ENCODE measurements at regions of chr19 and their contacts with region 1.

Region 1: GRCh38 chr19:2168619-2169424 is 5.1 kb downstream of the DOT1L start:
- DNase-seq: peak; percentile 74
- ATAC-seq: peak; percentile 49
- H3K4me3 Mint-ChIP-seq: peak overlapping the region; percentile 84
- H3K27ac Mint-ChIP-seq: peak overlapping the region; percentile 92
- H3K4me1 Mint-ChIP-seq: peaks cover 84% of the 10 kb centered on the region
- H3K27me3 Mint-ChIP-seq: no peaks in the 10 kb centered on the region
- CTCF ChIP-seq: no peak

Region 2: GRCh38 chr19:2016041-2016807 is 152.6 kb before region 1 on chr19:
- CTCF ChIA-PET with region 1: no interaction called
- POLR2A ChIA-PET with region 1: no interaction called
- intact Hi-C with region 1: no loop called
- DNase-seq: no peak
- ATAC-seq: peak; percentile 73
- H3K4me3 Mint-ChIP-seq: peak overlapping the region; percentile 60
- H3K27ac Mint-ChIP-seq: peak overlapping the region; percentile 56
- H3K4me1 Mint-ChIP-seq: peaks cover 29% of the 10 kb centered on the region
- H3K27me3 Mint-ChIP-seq: no peaks in the 10 kb centered on the region
- CTCF ChIP-seq: no peak

Region 3: GRCh38 chr19:2050991-2051772 is 117.6 kb before region 1 on chr19 and contains the start of gene MKNK2:
- CTCF ChIA-PET with region 1: no interaction called
- POLR2A ChIA-PET with region 1: interaction called, 19 read pairs
- intact Hi-C with region 1: no loop called
- DNase-seq: peak; percentile 99
- ATAC-seq: peak; percentile 61
- H3K4me3 Mint-ChIP-seq: peak within 1 kb of the TSS; percentile 93
- H3K27ac Mint-ChIP-seq: peak within 1 kb of the TSS; percentile 97
- H3K4me1 Mint-ChIP-seq: peaks cover 77% of the 10 kb centered on the region
- H3K27me3 Mint-ChIP-seq: no peaks in the 10 kb centered on the region
- CTCF ChIP-seq: no peak
- total RNA-seq, gene MKNK2: 1,134 and 1,197 TPM in 2 replicates

Region 4: DNA sequence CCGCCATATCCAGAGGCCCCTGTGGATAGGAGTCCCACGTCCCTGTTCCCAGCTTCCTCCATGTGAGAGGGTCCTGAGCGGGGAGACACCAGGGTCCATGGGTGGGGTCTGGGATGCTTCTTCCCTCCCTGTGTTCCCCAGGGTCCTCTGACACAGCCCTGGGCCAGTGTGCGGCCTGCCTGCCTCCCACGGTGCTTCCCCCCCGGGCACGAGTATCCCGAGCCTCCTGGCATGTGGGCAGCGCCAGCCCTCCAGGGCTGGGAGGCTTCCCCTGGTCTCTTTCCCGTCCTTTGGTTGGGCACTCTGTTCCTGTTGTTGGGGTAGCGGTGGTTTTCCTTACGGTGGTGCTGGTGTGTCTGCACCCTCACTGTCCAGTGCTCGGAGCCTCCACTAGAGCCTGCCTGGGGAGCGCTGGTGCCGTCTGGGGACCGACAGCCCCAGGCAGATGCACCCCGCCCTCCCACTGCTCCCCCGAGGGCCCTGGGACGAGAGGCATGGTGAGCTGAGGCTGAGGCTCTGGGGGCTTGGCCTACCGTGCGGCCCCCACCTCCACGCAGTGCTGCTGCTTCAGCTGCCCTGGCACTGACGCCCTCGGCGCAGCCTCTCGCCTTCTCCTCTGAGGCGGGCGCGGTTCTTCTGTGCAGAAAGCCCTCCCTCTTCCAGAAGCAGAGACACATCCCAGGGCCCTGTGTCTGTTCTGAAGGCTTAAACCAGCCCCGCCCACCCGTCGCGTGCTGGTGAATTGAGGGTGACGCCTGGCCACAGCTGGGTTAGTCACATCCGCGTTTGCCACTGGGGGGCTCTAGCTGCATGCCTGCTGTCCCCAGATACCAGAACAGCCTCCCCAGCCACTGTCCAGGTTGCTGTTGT is 39.4 kb after region 1 on chr19:
- CTCF ChIA-PET with region 1: no interaction called
- POLR2A ChIA-PET with region 1: no interaction called
- intact Hi-C with region 1: no loop called
- DNase-seq: no peak
- ATAC-seq: peak; percentile 76
- H3K4me3 Mint-ChIP-seq: no peak overlapping the region
- H3K27ac Mint-ChIP-seq: no peak overlapping the region
- H3K4me1 Mint-ChIP-seq: peaks cover 6% of the 10 kb centered on the region
- H3K27me3 Mint-ChIP-seq: no peaks in the 10 kb centered on the region
- CTCF ChIP-seq: no peak

Region 5: GRCh38 chr19:2223959-2224358 is 55.1 kb after region 1 on chr19:
- CTCF ChIA-PET with region 1: interaction called, 3 read pairs
- POLR2A ChIA-PET with region 1: interaction called, 9 read pairs
- intact Hi-C with region 1: loop called (anchors 1 kb)
- DNase-seq: peak; percentile 67
- ATAC-seq: peak; percentile 89
- H3K4me3 Mint-ChIP-seq: peak overlapping the region; percentile 48
- H3K27ac Mint-ChIP-seq: peak overlapping the region; percentile 87
- H3K4me1 Mint-ChIP-seq: peaks cover 37% of the 10 kb centered on the region
- H3K27me3 Mint-ChIP-seq: no peaks in the 10 kb centered on the region
- CTCF ChIP-seq: no peak

Region 6: GRCh38 chr19:2455851-2456570 is 287.2 kb after region 1 on chr19:
- CTCF ChIA-PET with region 1: no interaction called
- POLR2A ChIA-PET with region 1: no interaction called
- intact Hi-C with region 1: loop called (anchors 5 kb)
- DNase-seq: peak; percentile 51
- ATAC-seq: peak; percentile 53
- H3K4me3 Mint-ChIP-seq: peak overlapping the region; percentile 89
- H3K27ac Mint-ChIP-seq: peak overlapping the region; percentile 85
- H3K4me1 Mint-ChIP-seq: peaks cover 30% of the 10 kb centered on the region
- H3K27me3 Mint-ChIP-seq: no peaks in the 10 kb centered on the region
- CTCF ChIP-seq: no peak

Region 7: DNA sequence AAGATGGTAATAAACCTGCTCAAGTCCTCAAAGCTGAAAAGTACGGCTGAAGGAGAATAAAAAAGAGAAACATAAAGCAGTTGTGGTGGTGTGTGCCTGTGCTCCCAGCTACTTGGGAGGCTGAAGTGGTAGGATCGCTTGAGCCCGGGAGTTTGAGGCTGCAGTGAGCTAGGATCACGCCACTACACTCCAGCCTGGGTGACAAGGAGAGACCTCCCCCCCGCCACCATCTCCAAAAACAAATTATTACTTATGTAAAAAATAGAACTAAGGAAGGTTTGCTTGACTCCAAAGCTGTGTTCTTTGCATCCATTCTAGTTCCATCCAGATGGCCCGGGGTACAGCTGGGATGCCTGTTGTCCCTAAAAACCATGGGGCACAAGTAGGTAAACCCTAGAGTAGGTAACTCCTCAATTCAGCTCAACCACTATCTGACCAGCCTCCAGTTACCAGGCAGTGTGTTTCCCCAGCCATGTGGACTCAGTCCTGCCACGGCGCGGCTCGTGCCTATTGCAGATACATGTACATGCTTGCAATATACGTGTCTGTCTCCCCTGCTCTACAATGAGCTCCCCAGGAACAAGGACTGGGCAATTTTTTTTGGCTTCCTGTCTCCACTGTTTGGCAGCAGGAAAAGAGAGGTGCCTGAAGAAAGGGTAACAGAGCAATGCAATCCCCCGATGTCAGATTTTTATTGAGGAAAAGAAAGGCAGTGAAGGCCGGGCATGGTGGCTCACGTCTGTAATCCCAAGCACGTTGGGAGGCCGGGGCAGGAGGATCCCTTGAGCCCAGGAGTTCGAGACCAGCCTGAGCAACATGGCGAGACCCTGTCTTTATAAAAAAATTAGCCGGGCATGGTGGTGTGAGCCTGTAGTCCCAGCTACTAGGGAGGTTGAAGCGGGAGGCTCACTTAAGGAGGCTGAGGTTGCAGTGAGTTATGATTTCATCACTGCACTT is 432.4 kb after region 1 on chr19:
- CTCF ChIA-PET with region 1: no interaction called
- POLR2A ChIA-PET with region 1: no interaction called
- intact Hi-C with region 1: no loop called
- DNase-seq: no peak
- ATAC-seq: no peak
- H3K4me3 Mint-ChIP-seq: no peak overlapping the region
- H3K27ac Mint-ChIP-seq: peak overlapping the region; percentile 59
- H3K4me1 Mint-ChIP-seq: peaks cover 59% of the 10 kb centered on the region
- H3K27me3 Mint-ChIP-seq: no peaks in the 10 kb centered on the region
- CTCF ChIP-seq: no peak

Measured in activated B cell treated with CpG ODN at 0.5 μM for 24 hours (primary cell).